ENCODE measurements at regions of chr9 and their contacts with region 1.

Region 1: GRCh38 chr9:133074111-133074651 is 12.4 kb downstream of the CEL start:
- DNase-seq: no peak
- H3K4me3 ChIP-seq: no peak overlapping the region
- H3K27ac ChIP-seq: no peak overlapping the region
- H3K4me1 ChIP-seq: peaks cover 0 to 11% (median 2%) of the 10 kb centered on the region in 4 donors
- H3K27me3 ChIP-seq: no peaks in the 10 kb centered on the region
- CTCF ChIP-seq: no peak

Region 2: GRCh38 chr9:133087429-133088145 is 13.4 kb after region 1 on chr9:
- intact Hi-C with region 1: loop called (anchors 1 kb)
- DNase-seq: peak in 1 of 2 donors; percentile 48
- H3K4me3 ChIP-seq: no peak overlapping the region
- H3K27ac ChIP-seq: no peak overlapping the region
- H3K4me1 ChIP-seq: no peaks in the 10 kb centered on the region
- H3K27me3 ChIP-seq: no peaks in the 10 kb centered on the region
- CTCF ChIP-seq: no peak